Pancreas (tissue), 10 donors: ENCODE measurements at regions of chr11 and their contacts with region 1.

Region 1: GRCh38 chr11:73661035-73661628 is 14.8 kb downstream of the PLEKHB1 start:
- DNase-seq: peak; percentile 70 to 97 (median 86)
- ATAC-seq: peak; percentile 86 to 100 (median 98)
- H3K4me3 ChIP-seq: peak overlapping the region in 1 of 4 donors; percentile 22
- H3K27ac ChIP-seq: no peak overlapping the region
- H3K4me1 ChIP-seq: peaks cover 0 to 3% (median 0%) of the 10 kb centered on the region in 3 donors
- H3K27me3 ChIP-seq: no peaks in the 10 kb centered on the region
- CTCF ChIP-seq: peak; percentile 88 to 95 (median 90)

Region 2: GRCh38 chr11:73404048-73404447 is 257.1 kb before region 1 on chr11:
- intact Hi-C with region 1: loop called in 2 of 3 experiments (anchors 10 kb)
- DNase-seq: no peak
- ATAC-seq: peak; percentile 48 to 85 (median 85)
- H3K4me3 ChIP-seq: no peak overlapping the region
- H3K27ac ChIP-seq: no peak overlapping the region
- H3K4me1 ChIP-seq: no peaks in the 10 kb centered on the region
- H3K27me3 ChIP-seq: no peaks in the 10 kb centered on the region
- CTCF ChIP-seq: peak in 2 of 4 donors; percentile 22 to 25

Region 3: GRCh38 chr11:73625696-73626318 is 35.3 kb before region 1 on chr11:
- intact Hi-C with region 1: loop called in 1 of 3 experiments (anchors 2 kb)
- DNase-seq: peak; percentile 68 to 86 (median 76)
- ATAC-seq: peak; percentile 80 to 99 (median 96)
- H3K4me3 ChIP-seq: no peak overlapping the region
- H3K27ac ChIP-seq: no peak overlapping the region
- H3K4me1 ChIP-seq: no peaks in the 10 kb centered on the region
- H3K27me3 ChIP-seq: no peaks in the 10 kb centered on the region
- CTCF ChIP-seq: peak; percentile 88 to 96 (median 94)